Naive thymus-derived CD8-positive, alpha-beta T cell (primary cell): ENCODE measurements at regions of chr17 and their contacts with region 1.

Region 1: DNA sequence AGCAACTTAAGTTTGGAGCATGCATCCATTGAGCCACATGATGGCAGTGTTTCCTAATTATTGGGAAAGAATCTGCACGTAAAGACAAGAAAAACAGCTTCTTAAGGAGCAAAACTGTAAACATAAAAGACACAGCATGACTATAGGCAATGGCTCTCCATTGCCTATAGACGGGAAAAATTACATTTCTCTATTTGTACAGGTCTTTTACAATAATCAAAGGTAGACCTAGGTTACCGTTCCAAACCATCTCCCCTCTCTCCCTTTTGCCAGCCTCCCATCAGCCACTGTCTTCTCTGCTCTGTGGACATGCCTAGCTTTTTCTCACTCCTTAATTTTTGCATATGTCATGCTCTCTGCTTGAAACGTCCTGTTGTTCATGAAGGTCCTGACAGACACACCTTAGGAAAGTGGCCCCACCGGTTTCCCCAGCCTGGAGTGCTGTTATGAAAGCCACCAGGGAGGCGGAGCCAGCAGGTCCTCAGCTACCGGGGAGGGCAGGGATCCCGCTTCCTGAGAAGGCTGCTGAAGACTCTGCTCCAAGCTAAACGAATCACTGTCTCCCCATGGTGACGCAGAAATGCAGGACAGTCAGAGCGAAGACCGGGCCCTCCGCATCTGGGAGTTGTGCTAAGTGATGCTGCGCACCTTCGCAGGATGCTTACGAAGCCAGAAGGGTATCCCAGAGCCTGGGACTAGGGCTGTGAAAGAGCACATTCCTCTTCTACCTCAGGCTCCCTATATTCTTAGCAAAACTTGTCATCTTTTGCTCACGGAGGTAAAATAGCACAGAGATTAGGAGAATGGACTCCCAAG is 2.2 kb upstream of the SLC16A11 start:
- DNase-seq: peak in 7 of 10 donors; percentile 31 to 75 (median 65)
- ATAC-seq: peak; percentile 27 to 36
- H3K4me3 Mint-ChIP-seq: peak overlapping the region; percentile 81 to 95 (median 88)
- H3K27ac Mint-ChIP-seq: peak overlapping the region; percentile 81 to 96 (median 93)
- H3K4me1 Mint-ChIP-seq: peaks cover 20 to 38% (median 38%) of the 10 kb centered on the region in 4 donors
- H3K27me3 Mint-ChIP-seq: peaks cover 0 to 2% (median 0%) of the 10 kb centered on the region in 5 donors

Region 2: GRCh38 chr17:7014261-7014994 is 31.7 kb before region 1 on chr17:
- POLR2A ChIA-PET with region 1: interaction called, 12 read pairs
- DNase-seq: peak; percentile 93 to 98 (median 96)
- ATAC-seq: peak; percentile 80 to 82
- H3K4me3 Mint-ChIP-seq: peak overlapping the region; percentile 88 to 99 (median 96)
- H3K27ac Mint-ChIP-seq: peak overlapping the region; percentile 98 to 100 (median 100)
- H3K4me1 Mint-ChIP-seq: peaks cover 32 to 89% (median 76%) of the 10 kb centered on the region in 4 donors
- H3K27me3 Mint-ChIP-seq: no peaks in the 10 kb centered on the region

Region 3: GRCh38 chr17:7021993-7022778 is 23.9 kb before region 1 on chr17:
- POLR2A ChIA-PET with region 1: interaction called, 12 read pairs
- DNase-seq: peak; percentile 57 to 80 (median 74)
- ATAC-seq: peak; percentile 58 to 77
- H3K4me3 Mint-ChIP-seq: peak overlapping the region; percentile 36 to 84 (median 75)
- H3K27ac Mint-ChIP-seq: peak overlapping the region in 9 of 10 donors; percentile 37 to 93 (median 81)
- H3K4me1 Mint-ChIP-seq: peaks cover 32 to 69% (median 50%) of the 10 kb centered on the region in 4 donors
- H3K27me3 Mint-ChIP-seq: peaks cover 0 to 10% (median 0%) of the 10 kb centered on the region in 5 donors

Region 4: DNA sequence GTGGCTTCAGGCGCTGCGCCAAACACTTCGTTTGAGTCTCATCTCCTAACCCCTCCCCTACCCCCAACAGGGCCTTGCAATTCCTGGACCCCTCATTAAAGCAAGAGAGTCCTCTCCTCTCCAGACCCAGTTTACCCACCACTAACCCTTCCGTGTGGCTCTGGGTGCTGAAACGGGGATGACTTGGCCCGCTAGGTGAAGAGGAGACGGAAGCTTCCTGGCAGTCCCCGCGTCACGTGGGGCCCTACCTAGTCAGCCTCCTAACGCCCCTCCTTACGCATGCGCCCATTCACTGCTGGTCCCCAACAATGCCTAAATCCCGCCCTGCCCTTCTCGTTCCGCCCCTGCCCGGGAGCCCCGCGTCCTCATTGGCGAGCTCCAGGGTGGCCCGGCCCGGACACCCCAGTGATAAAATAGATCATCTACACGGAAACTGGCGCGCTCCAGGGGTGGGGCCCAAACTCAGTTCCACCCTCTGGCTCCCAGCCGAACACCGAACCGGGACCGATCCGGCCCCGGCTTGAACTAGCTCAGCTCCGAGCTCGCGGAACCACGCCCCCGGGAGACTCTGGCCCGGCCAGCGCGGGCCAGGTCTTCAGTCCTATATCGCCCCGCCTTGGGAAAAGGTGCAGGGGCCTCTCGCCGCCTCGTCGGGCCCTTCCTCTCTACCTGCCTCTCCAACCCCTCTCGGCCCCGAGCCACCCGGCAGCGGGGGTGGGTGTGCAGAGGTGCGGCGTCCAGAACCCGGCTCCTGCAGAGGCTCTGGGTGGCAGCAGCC is 10.3 kb before region 1 on chr17 and contains the start of gene SLC16A13:
- POLR2A ChIA-PET with region 1: interaction called, 46 read pairs
- DNase-seq: peak; percentile 93 to 99 (median 96)
- ATAC-seq: peak; percentile 88 to 91
- H3K4me3 Mint-ChIP-seq: peak within 1 kb of the TSS; percentile 91 to 97 (median 94)
- H3K27ac Mint-ChIP-seq: peak within 1 kb of the TSS; percentile 97 to 99 (median 98)
- H3K4me1 Mint-ChIP-seq: peaks cover 30 to 71% (median 67%) of the 10 kb centered on the region in 4 donors
- H3K27me3 Mint-ChIP-seq: no peaks in the 10 kb centered on the region
- polyA plus RNA-seq, gene SLC16A13: 0.93 to 1.2 (median 0.97) TPM

Region 5: GRCh38 chr17:7081341-7082062 is 35.4 kb after region 1 on chr17:
- POLR2A ChIA-PET with region 1: no interaction called
- DNase-seq: peak in 6 of 10 donors; percentile 8 to 27 (median 21)
- ATAC-seq: peak; percentile 49 to 81
- H3K4me3 Mint-ChIP-seq: peak overlapping the region in 6 of 10 donors; percentile 21 to 52 (median 38)
- H3K27ac Mint-ChIP-seq: no peak overlapping the region
- H3K4me1 Mint-ChIP-seq: peaks cover 15 to 41% (median 31%) of the 10 kb centered on the region in 4 donors
- H3K27me3 Mint-ChIP-seq: peaks cover 3 to 16% (median 8%) of the 10 kb centered on the region in 5 donors

Region 6: DNA sequence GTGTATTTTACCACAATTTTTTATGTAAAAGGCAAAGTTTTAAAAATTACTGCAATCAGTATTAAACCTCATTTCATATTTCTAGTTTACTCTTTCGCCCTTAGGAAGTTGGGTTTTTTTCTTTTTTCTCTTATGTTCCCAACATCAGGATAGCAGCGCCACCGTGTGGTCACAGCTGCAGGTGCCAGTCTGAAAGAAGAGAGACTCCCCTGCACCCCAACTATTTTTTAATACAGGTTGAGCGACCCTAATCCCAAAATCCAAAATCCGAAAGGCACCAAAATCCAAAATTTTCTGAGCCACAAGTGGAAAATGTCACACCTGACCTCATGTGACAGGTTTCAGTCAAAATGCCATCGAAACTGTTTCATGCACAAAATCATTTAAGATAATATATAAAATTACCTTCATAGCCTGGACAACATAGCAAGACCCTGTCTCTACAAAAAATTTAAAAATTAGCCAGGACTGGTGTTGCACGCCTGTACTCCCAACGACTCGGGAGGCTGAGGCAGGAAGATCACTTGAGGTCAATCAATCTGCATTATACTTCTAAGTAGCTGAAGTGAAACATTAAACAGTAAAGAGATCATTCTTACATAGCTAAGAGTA is 90.3 kb after region 1 on chr17:
- POLR2A ChIA-PET with region 1: interaction called, 83 read pairs
- DNase-seq: peak; percentile 63 to 90 (median 73)
- ATAC-seq: no peak
- H3K4me3 Mint-ChIP-seq: peak overlapping the region in 3 of 10 donors; percentile 4 to 12 (median 4)
- H3K27ac Mint-ChIP-seq: peak overlapping the region in 1 of 10 donors; percentile 13
- H3K4me1 Mint-ChIP-seq: peaks cover 13 to 30% (median 19%) of the 10 kb centered on the region in 4 donors
- H3K27me3 Mint-ChIP-seq: peaks cover 0 to 17% (median 7%) of the 10 kb centered on the region in 5 donors

Region 7: GRCh38 chr17:7219812-7220581 is 173.9 kb after region 1 on chr17 and contains the starts of genes ACADVL and DLG4:
- POLR2A ChIA-PET with region 1: interaction called, 10 read pairs
- DNase-seq: peak; percentile 61 to 86 (median 68)
- ATAC-seq: peak; percentile 64 to 71
- H3K4me3 Mint-ChIP-seq: peak within 1 kb of the TSS; percentile 88 to 97 (median 94)
- H3K27ac Mint-ChIP-seq: peak within 1 kb of the TSS; percentile 90 to 99 (median 98)
- H3K4me1 Mint-ChIP-seq: peaks cover 33 to 64% (median 57%) of the 10 kb centered on the region in 4 donors
- H3K27me3 Mint-ChIP-seq: no peaks in the 10 kb centered on the region
- polyA plus RNA-seq, gene ACADVL: 78.8 to 91.2 (median 85.2) TPM
- polyA plus RNA-seq, gene DLG4: 0.24 to 0.62 (median 0.33) TPM

Region 8: GRCh38 chr17:7239091-7240027 is 193.2 kb after region 1 on chr17 and contains the start of gene PHF23:
- POLR2A ChIA-PET with region 1: interaction called, 10 read pairs
- DNase-seq: peak; percentile 92 to 98 (median 96)
- ATAC-seq: peak; percentile 51 to 67
- H3K4me3 Mint-ChIP-seq: peak within 1 kb of the TSS; percentile 83 to 100 (median 96)
- H3K27ac Mint-ChIP-seq: peak within 1 kb of the TSS; percentile 81 to 100 (median 98)
- H3K4me1 Mint-ChIP-seq: peaks cover 46 to 75% (median 63%) of the 10 kb centered on the region in 4 donors
- H3K27me3 Mint-ChIP-seq: peaks cover 0 to 4% (median 0%) of the 10 kb centered on the region in 5 donors
- polyA plus RNA-seq, gene PHF23: 18.1 to 35.7 (median 22.2) TPM